HepG2 (cell line): ENCODE measurements at regions of chr12 and their contacts with region 1.

Region 1: GRCh38 chr12:13534645-13535398 is 338.3 kb downstream of the EMP1 start:
- DNase-seq: peak; percentile 39
- ATAC-seq: peak; percentile 77
- H3K4me3 ChIP-seq: no peak overlapping the region
- H3K27ac ChIP-seq: no peak overlapping the region
- H3K4me1 ChIP-seq: no peaks in the 10 kb centered on the region
- H3K27me3 ChIP-seq: no peaks in the 10 kb centered on the region
- CTCF ChIP-seq: peak; percentile 65
- EP300 ChIP-seq: no peak
- POLR2A ChIP-seq: no peak
- RAD21 ChIP-seq: no peak

Region 2: GRCh38 chr12:13278249-13278787 is 256.5 kb before region 1 on chr12:
- CTCF ChIA-PET with region 1: no interaction called
- POLR2A ChIA-PET with region 1: no interaction called
- in situ Hi-C with region 1: loop called (anchors 10 kb)
- intact Hi-C with region 1: no loop called
- DNase-seq: peak; percentile 26
- ATAC-seq: peak; percentile 99
- H3K4me3 ChIP-seq: peak overlapping the region in 1 of 3 experiments; percentile 34; a peak in 1 of 6 replicates
- H3K27ac ChIP-seq: no peak overlapping the region
- H3K4me1 ChIP-seq: no peaks in the 10 kb centered on the region
- H3K27me3 ChIP-seq: peaks cover 7 to 44% of the 10 kb centered on the region in 2 experiments; a peak in 3 of 5 replicates
- CTCF ChIP-seq: peak; percentile 88
- EP300 ChIP-seq: no peak
- POLR2A ChIP-seq: no peak
- RAD21 ChIP-seq: peak; percentile 43; the same call in 1 of the 2 replicates